ENCODE measurements at regions of chr6 and their contacts with region 1.

Region 1: GRCh38 chr6:98769544-98769943 is 64.8 kb upstream of the POU3F2 start:
- DNase-seq: no peak
- ATAC-seq: no peak

Region 2: DNA sequence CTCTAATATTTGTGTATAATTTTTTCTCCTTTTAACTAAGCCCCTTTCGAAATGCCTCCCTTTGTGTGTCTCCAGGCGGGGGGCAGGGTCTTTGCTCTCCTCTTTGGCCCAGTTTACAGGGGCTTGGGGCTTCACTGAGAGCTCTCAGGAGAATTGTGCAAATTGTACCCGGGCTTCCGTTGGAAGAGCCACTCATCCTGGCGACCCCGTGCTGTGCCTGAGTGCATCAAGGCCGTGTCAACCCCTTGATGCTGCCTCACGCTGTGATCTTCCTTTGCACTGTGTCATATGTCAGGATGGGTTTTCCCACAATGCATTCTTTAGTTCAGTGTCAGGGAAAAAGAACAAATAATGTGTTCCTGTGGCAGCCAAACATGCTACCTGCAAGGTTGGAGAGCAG is 53.2 kb before region 1 on chr6:
- intact Hi-C with region 1: no loop called
- DNase-seq: no peak
- ATAC-seq: no peak

Region 3: GRCh38 chr6:98787961-98788360 is 18.4 kb after region 1 on chr6:
- intact Hi-C with region 1: loop called in 1 of 2 experiments (anchors 1 kb)
- DNase-seq: no peak
- ATAC-seq: no peak